Activated CD4-positive, alpha-beta T cell treated with anti-CD3 and anti-CD28 coated beads, Interleukin-2, amount 10 ng/mL, durations not matched to agents 24 days and 14 days (primary cell): ENCODE measurements at regions of chr2 and their contacts with region 1.

Region 1: DNA sequence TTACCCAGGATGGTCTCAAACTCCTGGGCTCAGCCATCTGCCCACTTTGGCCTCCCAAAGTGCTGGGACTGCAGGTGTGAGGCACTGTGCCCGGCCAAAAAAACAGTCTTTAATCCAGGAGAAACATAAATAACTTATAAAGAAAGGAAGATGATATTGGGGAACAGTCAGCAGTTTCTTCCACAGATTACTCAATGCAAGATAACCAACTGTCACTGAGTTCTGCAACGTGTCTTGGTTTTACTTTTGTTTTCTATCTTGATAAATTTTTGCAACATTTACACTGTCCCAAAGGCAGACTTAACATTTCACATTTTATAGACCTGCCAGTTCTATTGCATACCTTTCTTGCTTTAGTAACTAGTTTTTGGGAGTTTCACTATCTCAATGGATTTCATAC is 71.1 kb downstream of the ANKRD44 start:
- DNase-seq: peak; percentile 73
- H3K4me3 Mint-ChIP-seq: peak overlapping the region; percentile 86
- H3K27ac Mint-ChIP-seq: peak overlapping the region; percentile 94
- H3K4me1 Mint-ChIP-seq: peaks cover 71% of the 10 kb centered on the region
- H3K27me3 Mint-ChIP-seq: no peaks in the 10 kb centered on the region

Region 2: GRCh38 chr2:197216361-197216979 is 23.0 kb before region 1 on chr2:
- intact Hi-C with region 1: loop called (anchors 1 kb)
- DNase-seq: peak; percentile 72
- H3K4me3 Mint-ChIP-seq: peak overlapping the region; percentile 80
- H3K27ac Mint-ChIP-seq: peak overlapping the region; percentile 93
- H3K4me1 Mint-ChIP-seq: peaks cover 71% of the 10 kb centered on the region
- H3K27me3 Mint-ChIP-seq: no peaks in the 10 kb centered on the region

Region 3: DNA sequence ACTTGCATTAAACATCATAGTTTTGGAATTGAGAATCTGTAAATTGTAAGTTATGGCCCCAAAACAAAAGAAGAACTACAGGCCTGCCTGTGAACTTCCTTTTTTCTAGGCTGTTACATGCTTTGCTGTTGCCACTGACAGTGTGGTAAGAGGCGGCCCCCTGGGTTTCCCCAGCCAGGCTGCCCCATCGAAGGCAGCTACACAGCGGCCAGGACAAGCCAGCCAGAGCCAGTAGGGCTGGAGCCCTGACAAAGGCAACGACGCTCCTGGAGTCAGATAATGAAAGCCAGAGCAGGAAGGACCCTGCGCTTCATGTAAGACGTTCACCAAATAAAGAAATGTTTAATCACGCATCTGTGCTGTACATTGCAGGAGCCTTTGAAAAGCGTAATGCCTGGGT is 16.1 kb after region 1 on chr2:
- intact Hi-C with region 1: loop called (anchors 1 kb)
- DNase-seq: peak; percentile 94
- H3K4me3 Mint-ChIP-seq: peak overlapping the region; percentile 81
- H3K27ac Mint-ChIP-seq: peak overlapping the region; percentile 96
- H3K4me1 Mint-ChIP-seq: peaks cover 60% of the 10 kb centered on the region
- H3K27me3 Mint-ChIP-seq: no peaks in the 10 kb centered on the region

Region 4: GRCh38 chr2:197293252-197294007 is 54.0 kb after region 1 on chr2:
- intact Hi-C with region 1: loop called (anchors 2 kb)
- DNase-seq: peak; percentile 74
- H3K4me3 Mint-ChIP-seq: peak overlapping the region; percentile 82
- H3K27ac Mint-ChIP-seq: peak overlapping the region; percentile 96
- H3K4me1 Mint-ChIP-seq: peaks cover 75% of the 10 kb centered on the region
- H3K27me3 Mint-ChIP-seq: no peaks in the 10 kb centered on the region

Region 5: DNA sequence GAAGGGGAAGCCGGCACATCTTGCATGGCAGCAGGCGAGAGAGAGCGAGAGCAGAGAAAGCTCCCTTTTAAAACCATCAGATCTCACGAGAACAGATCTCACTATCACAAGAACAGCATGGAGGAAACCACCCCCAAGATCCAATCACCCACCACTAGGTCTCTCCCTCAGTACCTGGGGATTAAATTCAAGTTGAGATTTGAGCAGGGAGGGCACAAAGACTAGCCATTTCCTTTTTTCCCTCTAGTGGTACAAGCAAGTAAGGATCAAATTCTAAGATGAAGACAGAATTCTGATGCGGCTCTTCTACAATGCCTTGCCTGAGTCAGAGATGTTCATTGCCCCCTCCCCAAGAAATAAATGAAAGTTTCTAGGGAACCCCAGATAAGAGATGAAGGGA is 116.7 kb after region 1 on chr2:
- intact Hi-C with region 1: no loop called
- DNase-seq: no peak
- H3K4me3 Mint-ChIP-seq: peak overlapping the region; percentile 22
- H3K27ac Mint-ChIP-seq: peak overlapping the region; percentile 80
- H3K4me1 Mint-ChIP-seq: peaks cover 15% of the 10 kb centered on the region
- H3K27me3 Mint-ChIP-seq: no peaks in the 10 kb centered on the region

Region 6: DNA sequence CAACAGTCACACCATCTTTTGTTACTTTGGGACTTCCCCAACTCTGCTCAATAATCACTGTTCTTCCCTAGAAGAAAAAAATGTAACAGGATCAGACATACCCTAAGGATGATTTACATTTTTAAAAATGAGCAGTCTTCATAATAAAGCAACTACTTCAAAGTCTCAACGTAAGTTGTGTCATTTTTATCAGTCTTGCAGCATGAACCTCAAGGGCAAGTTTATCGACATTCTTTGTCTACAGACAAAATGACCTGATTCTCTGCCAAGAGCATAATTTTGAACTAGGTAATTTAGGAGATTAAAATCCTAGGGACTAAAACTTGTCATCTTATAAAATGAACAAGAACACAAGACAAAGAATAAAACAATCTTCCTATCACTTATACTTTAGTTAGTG is 257.9 kb after region 1 on chr2:
- intact Hi-C with region 1: no loop called
- DNase-seq: no peak
- H3K4me3 Mint-ChIP-seq: peak overlapping the region; percentile 95
- H3K27ac Mint-ChIP-seq: peak overlapping the region; percentile 72
- H3K4me1 Mint-ChIP-seq: peaks cover 46% of the 10 kb centered on the region
- H3K27me3 Mint-ChIP-seq: no peaks in the 10 kb centered on the region